ENCODE measurements at regions of chr2 and their contacts with region 1.

Region 1: DNA sequence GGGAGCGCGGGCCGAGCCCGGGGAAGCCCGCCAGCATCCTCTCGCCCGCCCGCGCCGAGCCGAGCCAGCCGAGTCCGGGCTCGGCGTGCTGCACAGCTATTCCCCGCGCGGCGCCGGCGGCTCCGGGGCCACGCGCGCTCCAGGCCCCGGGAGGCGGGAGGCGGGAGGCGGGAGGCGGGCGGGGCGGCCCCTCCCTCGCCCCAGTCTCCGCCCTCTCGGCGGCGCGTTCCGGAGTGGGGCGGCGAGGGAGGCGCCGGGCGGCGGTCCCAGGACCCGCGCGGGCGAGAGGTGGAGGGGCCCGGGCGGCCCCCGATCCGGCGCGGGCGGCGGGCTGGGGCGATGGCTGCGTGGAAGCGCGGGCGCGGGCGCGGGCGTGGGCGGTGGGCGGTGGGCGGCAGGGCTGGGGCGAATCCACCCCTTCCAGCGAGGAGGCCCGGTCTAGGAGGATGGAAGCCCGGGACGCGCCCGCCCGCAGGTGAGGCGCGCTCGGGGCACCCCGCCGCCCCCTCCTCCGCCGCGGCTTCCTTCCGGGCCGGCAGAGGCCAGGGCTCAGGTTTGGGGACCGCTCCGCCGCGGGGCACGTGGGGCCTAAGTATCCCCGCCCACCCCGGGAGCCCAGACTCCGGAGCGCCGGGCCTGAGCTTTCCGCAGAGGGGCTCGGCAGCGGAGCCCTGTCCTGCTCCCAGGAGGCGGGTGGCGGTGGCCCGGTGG is at the start of gene ADCY3:
- DNase-seq: peak in 1 of 2 donors; percentile 52
- H3K4me3 ChIP-seq: peak within 1 kb of the TSS; percentile 60 to 96 (median 70)
- H3K27ac ChIP-seq: peak within 1 kb of the TSS; percentile 67 to 88
- H3K4me1 ChIP-seq: peaks cover 0 to 9% of the 10 kb centered on the region in 2 donors
- H3K27me3 ChIP-seq: no peaks in the 10 kb centered on the region
- CTCF ChIP-seq: no peak
- POLR2A ChIP-seq: no peak
- total RNA-seq, gene ADCY3: 29.3 to 89.1 (median 56.1) TPM

Region 2: DNA sequence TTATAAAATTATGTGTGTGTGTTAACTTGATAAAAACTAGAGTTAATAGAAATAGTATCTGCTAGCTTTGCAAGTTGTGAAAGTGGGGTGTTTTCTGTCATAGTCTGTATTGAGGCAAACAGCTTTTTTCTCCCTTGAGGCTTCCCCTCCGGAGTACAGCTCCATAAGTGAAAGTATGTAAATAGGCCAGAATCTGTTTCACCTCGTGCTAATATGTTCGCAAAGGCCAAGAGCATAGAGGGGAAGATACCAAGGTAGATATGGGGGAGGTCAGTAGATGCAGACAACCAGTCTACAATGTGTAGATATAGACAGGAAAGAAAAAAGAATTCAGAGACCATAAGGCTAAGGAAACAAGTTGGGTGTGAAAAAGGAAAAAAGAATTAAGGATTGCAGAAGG is 199.9 kb before region 1 on chr2:
- intact Hi-C with region 1: no loop called
- DNase-seq: no peak
- H3K4me3 ChIP-seq: no peak overlapping the region
- H3K27ac ChIP-seq: no peak overlapping the region
- H3K4me1 ChIP-seq: no peaks in the 10 kb centered on the region
- H3K27me3 ChIP-seq: no peaks in the 10 kb centered on the region
- CTCF ChIP-seq: no peak
- POLR2A ChIP-seq: no peak

Region 3: GRCh38 chr2:24898122-24899021 is 21.9 kb before region 1 on chr2:
- intact Hi-C with region 1: no loop called
- DNase-seq: no peak
- H3K4me3 ChIP-seq: peak overlapping the region in 1 of 3 donors; percentile 54
- H3K27ac ChIP-seq: peak overlapping the region in 1 of 2 donors; percentile 43
- H3K4me1 ChIP-seq: no peaks in the 10 kb centered on the region
- H3K27me3 ChIP-seq: no peaks in the 10 kb centered on the region
- CTCF ChIP-seq: no peak
- POLR2A ChIP-seq: no peak

Region 4: DNA sequence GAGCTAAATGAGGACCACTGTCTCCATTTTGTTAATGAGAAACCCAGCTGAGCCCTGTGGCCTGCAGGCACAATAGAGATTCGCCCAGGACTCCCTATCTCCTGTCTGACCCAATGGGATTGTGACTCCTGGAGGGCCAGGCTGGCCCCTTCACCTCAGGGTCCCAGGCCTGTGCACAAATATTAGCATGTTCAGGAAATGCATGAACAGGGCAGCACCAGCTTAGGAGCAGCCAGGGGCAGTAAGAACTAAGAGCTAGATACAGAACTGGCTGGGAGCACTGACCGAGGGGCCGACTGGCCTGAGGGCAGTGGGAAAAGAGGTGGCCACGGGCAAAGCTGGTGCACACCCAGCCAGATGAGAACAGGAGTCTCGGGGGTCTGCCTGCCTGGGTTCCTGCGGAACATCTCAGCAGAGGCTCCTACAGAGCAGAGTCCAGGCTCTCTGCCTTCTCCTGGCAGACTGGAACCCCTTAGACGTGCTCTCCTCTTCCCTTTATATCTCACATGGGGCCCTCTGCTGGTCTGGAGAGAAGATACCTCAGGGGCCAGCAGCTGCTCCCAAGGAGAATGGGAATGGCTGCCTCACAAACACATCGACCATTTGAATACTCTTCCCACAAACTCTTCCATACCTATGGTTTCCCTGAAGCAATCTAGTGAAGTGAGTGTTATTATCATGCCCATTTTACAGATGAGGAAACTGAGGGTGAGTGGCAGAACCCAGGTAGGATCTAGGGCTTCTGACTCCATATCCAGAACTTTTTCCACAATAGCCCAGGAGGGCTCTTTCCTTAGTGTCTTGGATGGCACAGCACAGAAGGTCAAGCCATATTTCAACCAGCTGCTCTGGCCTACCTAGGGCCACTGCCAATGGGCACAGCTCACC is 1635.2 kb after region 1 on chr2:
- intact Hi-C with region 1: loop called (anchors 5 kb)
- DNase-seq: no peak
- H3K4me3 ChIP-seq: no peak overlapping the region
- H3K27ac ChIP-seq: no peak overlapping the region
- H3K4me1 ChIP-seq: no peaks in the 10 kb centered on the region
- H3K27me3 ChIP-seq: peaks cover 0 to 11% of the 10 kb centered on the region in 2 donors
- CTCF ChIP-seq: no peak
- POLR2A ChIP-seq: no peak

Measured in breast epithelium (tissue), 4 donors.